Mammary epithelial cell (primary cell): ENCODE measurements at regions of chr2 and their contacts with region 1.

Region 1: GRCh38 chr2:68909793-68910674 is 38.8 kb upstream of the BMP10 start:
- DNase-seq: peak; percentile 48
- H3K4me3 ChIP-seq: no peak overlapping the region
- H3K27ac ChIP-seq: no peak overlapping the region
- H3K4me1 ChIP-seq: peaks cover 30% of the 10 kb centered on the region
- H3K27me3 ChIP-seq: no peaks in the 10 kb centered on the region
- CTCF ChIP-seq: peak; percentile 90 to 97

Region 2: GRCh38 chr2:68726608-68727367 is 183.2 kb before region 1 on chr2:
- CTCF ChIA-PET with region 1: no interaction called
- dilution Hi-C with region 1: loop called (anchors 25 kb)
- in situ Hi-C with region 1: no loop called
- intact Hi-C with region 1: no loop called
- DNase-seq: peak; percentile 34
- H3K4me3 ChIP-seq: no peak overlapping the region
- H3K27ac ChIP-seq: no peak overlapping the region
- H3K4me1 ChIP-seq: peaks cover 24% of the 10 kb centered on the region
- H3K27me3 ChIP-seq: no peaks in the 10 kb centered on the region
- CTCF ChIP-seq: no peak

Region 3: GRCh38 chr2:68742626-68743415 is 167.2 kb before region 1 on chr2:
- CTCF ChIA-PET with region 1: interaction called, 3 read pairs
- dilution Hi-C with region 1: loop called (anchors 25 kb)
- in situ Hi-C with region 1: loop called in 1 of 2 experiments (anchors 10 kb)
- intact Hi-C with region 1: no loop called
- DNase-seq: no peak
- H3K4me3 ChIP-seq: no peak overlapping the region
- H3K27ac ChIP-seq: no peak overlapping the region
- H3K4me1 ChIP-seq: peaks cover 36% of the 10 kb centered on the region
- H3K27me3 ChIP-seq: no peaks in the 10 kb centered on the region
- CTCF ChIP-seq: no peak

Region 4: GRCh38 chr2:68751397-68752339 is 158.4 kb before region 1 on chr2:
- CTCF ChIA-PET with region 1: no interaction called
- dilution Hi-C with region 1: loop called (anchors 25 kb)
- in situ Hi-C with region 1: loop called in 1 of 2 experiments (anchors 10 kb)
- intact Hi-C with region 1: loop called (anchors 1 kb)
- DNase-seq: peak; percentile 87
- H3K4me3 ChIP-seq: no peak overlapping the region
- H3K27ac ChIP-seq: no peak overlapping the region
- H3K4me1 ChIP-seq: peaks cover 8% of the 10 kb centered on the region
- H3K27me3 ChIP-seq: no peaks in the 10 kb centered on the region
- CTCF ChIP-seq: peak; percentile 95 to 97

Region 5: DNA sequence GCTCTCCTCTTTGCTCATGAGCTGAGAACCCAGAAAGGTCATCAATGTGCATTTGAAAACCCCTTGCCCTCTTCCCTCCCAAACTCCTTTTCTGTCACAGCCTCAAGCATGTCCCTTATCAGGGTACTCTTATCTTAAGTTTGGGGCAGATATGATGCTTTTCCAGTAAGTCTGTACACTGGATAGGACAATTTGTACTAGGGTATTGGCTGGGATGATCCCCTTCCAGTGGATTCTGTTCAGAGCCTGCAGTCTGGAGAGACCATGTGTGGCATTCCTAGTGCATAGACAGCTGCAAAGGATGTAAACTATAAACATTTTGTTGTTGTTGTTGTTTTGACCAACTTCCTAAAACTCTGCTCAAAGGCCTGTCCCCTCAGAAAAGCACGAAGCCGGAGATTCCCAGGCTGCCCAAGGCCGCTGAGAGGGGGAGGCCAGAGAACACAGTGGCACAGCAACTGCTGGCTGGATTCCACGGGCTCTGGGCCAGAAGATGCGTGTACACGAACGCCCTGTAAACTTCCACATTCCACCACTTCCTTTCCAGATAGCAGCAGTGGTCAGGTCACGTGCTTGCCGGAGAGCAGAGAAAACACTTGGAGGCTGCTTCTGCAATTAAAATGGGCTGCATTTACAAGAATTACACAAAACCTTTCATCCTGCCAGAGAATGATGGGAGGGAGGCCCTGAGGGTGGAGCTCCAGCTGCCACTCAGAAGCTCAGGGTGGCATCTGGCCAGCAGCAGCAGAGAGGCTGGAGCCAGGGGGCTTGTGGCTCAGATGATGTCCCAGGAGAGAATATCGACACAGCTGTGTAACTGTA is 80.9 kb before region 1 on chr2:
- CTCF ChIA-PET with region 1: no interaction called
- dilution Hi-C with region 1: loop called (anchors 5 kb)
- in situ Hi-C with region 1: no loop called
- intact Hi-C with region 1: loop called (anchors 5 kb)
- DNase-seq: peak; percentile 88
- H3K4me3 ChIP-seq: no peak overlapping the region
- H3K27ac ChIP-seq: no peak overlapping the region
- H3K4me1 ChIP-seq: peaks cover 32% of the 10 kb centered on the region
- H3K27me3 ChIP-seq: no peaks in the 10 kb centered on the region
- CTCF ChIP-seq: peak in 1 of 2 donors; percentile 6

Region 6: DNA sequence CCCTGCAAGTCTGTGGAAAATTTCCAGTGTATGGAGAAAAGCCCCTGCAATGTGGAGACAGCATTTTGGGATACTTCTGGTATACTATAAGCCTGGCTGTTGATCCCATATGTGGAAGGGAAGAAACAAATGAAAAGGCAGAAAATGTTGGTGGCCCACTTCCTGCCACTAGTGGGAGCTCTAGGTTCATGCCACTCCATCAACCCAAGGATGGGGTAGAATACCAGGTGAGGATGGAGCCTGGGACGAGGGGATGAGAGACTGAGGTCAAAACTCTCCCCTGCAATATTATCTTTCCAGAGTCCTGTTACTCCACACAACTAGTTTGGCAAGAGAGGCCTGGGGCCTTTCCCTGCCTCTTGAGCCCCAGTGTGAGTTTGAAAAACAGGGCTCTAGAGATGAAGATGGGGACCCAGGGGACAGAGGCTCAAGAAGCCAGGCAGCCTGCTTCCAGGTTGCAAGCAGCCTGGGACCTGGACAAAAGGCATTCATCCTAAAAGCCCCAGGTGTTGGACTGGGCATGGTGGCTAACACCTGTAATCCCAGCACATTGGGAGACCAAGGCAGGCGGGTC is 70.7 kb before region 1 on chr2:
- CTCF ChIA-PET with region 1: no interaction called
- dilution Hi-C with region 1: no loop called
- in situ Hi-C with region 1: no loop called
- intact Hi-C with region 1: loop called (anchors 1 kb)
- DNase-seq: peak; percentile 12
- H3K4me3 ChIP-seq: no peak overlapping the region
- H3K27ac ChIP-seq: no peak overlapping the region
- H3K4me1 ChIP-seq: no peaks in the 10 kb centered on the region
- H3K27me3 ChIP-seq: no peaks in the 10 kb centered on the region
- CTCF ChIP-seq: peak; percentile 78 to 91

Region 7: DNA sequence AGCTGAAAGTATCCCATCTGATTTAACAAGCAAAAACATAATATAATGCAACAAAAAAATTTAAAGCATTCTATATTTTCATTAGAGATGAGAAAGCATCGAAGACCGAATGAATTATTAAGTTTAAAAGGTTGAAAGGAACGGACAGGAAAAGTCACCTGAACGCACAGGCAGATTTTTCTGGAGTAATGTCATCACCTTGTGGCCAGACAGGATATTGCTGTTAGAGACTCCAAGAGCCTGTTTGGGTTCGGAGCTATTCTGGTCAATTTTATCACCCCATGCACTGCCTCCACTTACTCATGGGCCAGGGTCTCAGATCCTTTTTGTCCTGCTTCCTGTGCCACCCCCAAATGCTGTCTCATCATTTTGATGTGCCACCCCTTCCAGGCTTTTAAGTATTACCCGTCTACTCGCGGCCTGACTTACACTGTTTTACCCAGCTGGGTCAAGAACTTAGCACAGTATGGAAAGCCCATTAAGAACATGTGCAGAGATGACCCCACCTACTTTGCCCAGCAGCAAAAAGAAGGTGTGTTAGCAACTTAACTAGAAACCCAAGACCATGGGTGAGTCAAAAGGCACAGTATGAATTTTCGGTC is 15.4 kb after region 1 on chr2:
- CTCF ChIA-PET with region 1: no interaction called
- dilution Hi-C with region 1: no loop called
- in situ Hi-C with region 1: no loop called
- intact Hi-C with region 1: loop called (anchors 1 kb)
- DNase-seq: peak; percentile 55
- H3K4me3 ChIP-seq: no peak overlapping the region
- H3K27ac ChIP-seq: no peak overlapping the region
- H3K4me1 ChIP-seq: peaks cover 21% of the 10 kb centered on the region
- H3K27me3 ChIP-seq: no peaks in the 10 kb centered on the region
- CTCF ChIP-seq: peak; percentile 99

Region 8: GRCh38 chr2:69007169-69007568 is 97.1 kb after region 1 on chr2:
- CTCF ChIA-PET with region 1: no interaction called
- dilution Hi-C with region 1: no loop called
- in situ Hi-C with region 1: no loop called
- intact Hi-C with region 1: no loop called
- DNase-seq: no peak
- H3K4me3 ChIP-seq: no peak overlapping the region
- H3K27ac ChIP-seq: no peak overlapping the region
- H3K4me1 ChIP-seq: no peaks in the 10 kb centered on the region
- H3K27me3 ChIP-seq: no peaks in the 10 kb centered on the region
- CTCF ChIP-seq: no peak